Dorsolateral prefrontal cortex (tissue), 120 donors: ENCODE measurements at regions of chr22 and their contacts with region 1.

Region 1: GRCh38 chr22:31211862-31212730 is at the start of gene LIMK2:
- DNase-seq: peak; percentile 84 to 95 (median 90)
- H3K4me3 ChIP-seq: peak within 1 kb of the TSS; percentile 60 to 96 (median 88)
- H3K27ac ChIP-seq: peak within 1 kb of the TSS in 50 of 59 donors; percentile 5 to 89 (median 64)
- H3K27me3 ChIP-seq: no peaks in the 10 kb centered on the region
- CTCF ChIP-seq: peak; percentile 33 to 96 (median 86)
- total RNA-seq, gene LIMK2: 16.4 to 108 (median 33.1) TPM

Region 2: DNA sequence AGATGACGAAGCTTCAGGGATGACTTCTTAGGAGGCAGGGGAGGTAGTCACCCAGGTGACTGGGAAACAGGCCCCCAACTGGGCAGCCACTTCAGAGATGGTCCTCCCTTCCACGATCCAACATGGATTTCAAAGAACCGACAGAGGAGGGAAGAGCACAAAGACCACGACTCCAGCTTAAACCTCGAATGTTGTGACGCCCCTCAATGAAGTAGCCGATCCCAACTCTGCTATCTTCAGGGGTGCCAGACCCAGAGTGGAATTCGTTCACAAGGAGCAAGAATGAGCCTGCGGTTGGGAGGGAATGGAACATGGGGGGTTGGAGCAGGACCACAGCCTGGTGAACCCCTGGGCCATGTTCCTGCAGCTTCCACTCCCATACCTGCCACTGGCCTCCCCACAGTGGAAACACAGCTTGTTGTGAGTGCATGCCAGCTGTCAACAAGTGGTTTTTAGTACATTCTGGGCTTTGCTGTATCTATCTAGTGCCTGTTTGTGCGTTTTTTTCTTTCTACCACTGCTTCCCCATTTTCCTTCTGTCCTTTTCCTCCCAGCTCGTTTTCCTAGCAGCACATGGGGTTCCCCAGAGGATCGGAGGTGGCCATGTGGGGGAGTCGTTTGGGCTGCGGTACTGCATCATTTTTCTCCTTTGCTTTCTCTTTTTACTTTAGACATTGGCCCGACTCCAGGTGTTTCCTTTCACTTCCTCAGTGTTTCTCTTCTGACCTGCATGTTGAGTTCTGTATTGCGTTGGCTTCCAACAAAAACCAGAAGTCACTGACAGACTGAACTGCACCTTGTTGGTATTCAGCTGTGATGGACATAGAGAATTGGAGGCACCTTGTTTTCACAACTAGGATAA is 309.4 kb before region 1 on chr22:
- intact Hi-C with region 1: no loop called
- DNase-seq: peak in 1 of 10 donors; percentile 5
- H3K4me3 ChIP-seq: no peak overlapping the region
- H3K27ac ChIP-seq: peak overlapping the region in 1 of 59 donors; percentile 29
- H3K27me3 ChIP-seq: no peaks in the 10 kb centered on the region
- CTCF ChIP-seq: no peak

Region 3: GRCh38 chr22:31062566-31063230 is 149.4 kb before region 1 on chr22:
- intact Hi-C with region 1: no loop called
- DNase-seq: no peak
- H3K4me3 ChIP-seq: no peak overlapping the region
- H3K27ac ChIP-seq: no peak overlapping the region
- H3K27me3 ChIP-seq: no peaks in the 10 kb centered on the region
- CTCF ChIP-seq: no peak

Region 4: DNA sequence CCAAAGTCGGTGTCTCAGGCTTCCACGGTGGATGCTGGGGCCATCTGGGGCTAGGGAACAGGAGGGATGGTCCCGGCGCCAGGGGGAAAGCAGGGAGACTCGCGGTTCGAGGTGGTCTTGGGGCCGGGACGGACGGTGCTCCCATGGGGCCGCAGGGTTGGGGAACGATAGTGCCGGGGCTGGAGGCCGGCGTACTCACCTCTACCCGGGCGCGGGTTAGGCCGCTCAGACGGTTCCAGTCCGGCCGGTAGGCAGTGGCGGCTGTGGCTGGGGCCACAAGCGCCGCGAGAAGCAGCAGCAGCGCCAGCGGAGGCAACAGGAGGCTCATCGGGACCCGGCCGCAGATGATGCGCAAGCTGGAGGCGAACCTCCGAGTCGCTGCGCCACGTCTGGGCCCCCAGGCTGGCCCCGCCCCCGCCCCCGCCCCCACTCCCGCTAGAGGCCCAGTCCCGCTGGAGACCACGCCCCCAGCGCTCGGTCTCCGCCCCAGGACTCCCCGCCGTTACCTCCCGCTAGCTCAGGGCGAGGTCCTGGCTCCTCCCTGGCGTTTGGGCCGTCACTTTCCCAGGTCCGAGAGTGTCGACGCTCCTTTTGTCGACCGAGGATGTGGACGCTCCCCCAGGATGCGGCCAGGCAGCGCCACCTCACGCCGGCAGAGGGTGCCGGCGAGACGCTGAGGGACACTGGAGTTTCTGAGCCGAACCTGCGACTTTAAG is 104.8 kb before region 1 on chr22 and contains the start of gene SELENOM:
- intact Hi-C with region 1: loop called in 1 of 2 experiments (anchors 5 kb)
- DNase-seq: peak; percentile 82 to 97 (median 93)
- H3K4me3 ChIP-seq: peak within 1 kb of the TSS; percentile 59 to 97 (median 88)
- H3K27ac ChIP-seq: peak within 1 kb of the TSS; percentile 7 to 97 (median 92)
- H3K27me3 ChIP-seq: no peaks in the 10 kb centered on the region
- CTCF ChIP-seq: peak; percentile 44 to 97 (median 86)
- total RNA-seq, gene SELENOM: 76.0 to 161 (median 116) TPM

Region 5: GRCh38 chr22:31155422-31155821 is 56.7 kb before region 1 on chr22:
- intact Hi-C with region 1: loop called in 1 of 2 experiments (anchors 5 kb)
- DNase-seq: no peak
- H3K4me3 ChIP-seq: no peak overlapping the region
- H3K27ac ChIP-seq: peak overlapping the region in 39 of 59 donors; percentile 0 to 78 (median 46)
- H3K27me3 ChIP-seq: no peaks in the 10 kb centered on the region
- CTCF ChIP-seq: no peak

Region 6: DNA sequence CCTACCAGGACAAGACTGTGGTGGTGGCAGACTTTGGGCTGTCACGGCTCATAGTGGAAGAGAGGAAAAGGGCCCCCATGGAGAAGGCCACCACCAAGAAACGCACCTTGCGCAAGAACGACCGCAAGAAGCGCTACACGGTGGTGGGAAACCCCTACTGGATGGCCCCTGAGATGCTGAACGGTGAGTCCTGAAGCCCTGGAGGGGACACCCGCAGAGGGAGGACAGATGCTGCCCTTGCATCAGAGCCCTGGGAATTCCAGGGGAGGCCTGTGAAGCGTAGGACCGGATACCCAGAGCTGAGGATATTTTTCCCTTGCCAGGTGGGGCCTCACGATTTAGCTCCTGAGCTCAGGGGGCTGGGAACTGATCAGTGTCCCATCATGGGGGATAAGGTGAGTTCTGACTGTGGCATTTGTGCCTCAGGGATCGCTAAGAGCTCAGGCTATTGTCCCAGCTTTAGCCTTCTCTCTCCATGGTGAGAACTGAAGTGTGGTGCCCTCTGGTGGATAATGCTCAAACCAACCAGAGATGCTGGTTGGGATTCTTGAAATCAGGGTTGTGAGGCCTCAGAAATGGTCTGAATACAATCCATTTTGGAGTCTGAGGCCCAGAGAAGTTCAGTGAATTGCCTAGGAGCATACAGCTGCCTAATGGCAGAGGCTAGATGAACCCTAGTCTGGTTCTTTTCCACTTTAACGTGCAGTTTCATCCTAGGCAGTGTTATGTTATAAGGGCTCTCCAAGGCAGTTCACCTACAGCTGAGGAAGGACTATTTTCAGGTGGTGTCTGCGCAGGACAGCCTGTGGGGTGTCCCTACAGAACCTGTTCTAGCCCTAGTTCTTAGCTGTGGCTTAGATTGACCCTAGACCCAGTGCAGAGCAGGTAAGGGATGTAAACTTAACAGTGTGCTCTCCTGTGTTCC is 60.7 kb after region 1 on chr22:
- intact Hi-C with region 1: loop called (anchors 5 to 10 kb)
- DNase-seq: peak in 6 of 10 donors; percentile 17 to 73 (median 56)
- H3K4me3 ChIP-seq: no peak overlapping the region
- H3K27ac ChIP-seq: peak overlapping the region in 12 of 59 donors; percentile 14 to 65 (median 28)
- H3K27me3 ChIP-seq: no peaks in the 10 kb centered on the region
- CTCF ChIP-seq: peak; percentile 50 to 86 (median 78)